ENCODE measurements at regions of chr3 and their contacts with region 1.

Region 1: DNA sequence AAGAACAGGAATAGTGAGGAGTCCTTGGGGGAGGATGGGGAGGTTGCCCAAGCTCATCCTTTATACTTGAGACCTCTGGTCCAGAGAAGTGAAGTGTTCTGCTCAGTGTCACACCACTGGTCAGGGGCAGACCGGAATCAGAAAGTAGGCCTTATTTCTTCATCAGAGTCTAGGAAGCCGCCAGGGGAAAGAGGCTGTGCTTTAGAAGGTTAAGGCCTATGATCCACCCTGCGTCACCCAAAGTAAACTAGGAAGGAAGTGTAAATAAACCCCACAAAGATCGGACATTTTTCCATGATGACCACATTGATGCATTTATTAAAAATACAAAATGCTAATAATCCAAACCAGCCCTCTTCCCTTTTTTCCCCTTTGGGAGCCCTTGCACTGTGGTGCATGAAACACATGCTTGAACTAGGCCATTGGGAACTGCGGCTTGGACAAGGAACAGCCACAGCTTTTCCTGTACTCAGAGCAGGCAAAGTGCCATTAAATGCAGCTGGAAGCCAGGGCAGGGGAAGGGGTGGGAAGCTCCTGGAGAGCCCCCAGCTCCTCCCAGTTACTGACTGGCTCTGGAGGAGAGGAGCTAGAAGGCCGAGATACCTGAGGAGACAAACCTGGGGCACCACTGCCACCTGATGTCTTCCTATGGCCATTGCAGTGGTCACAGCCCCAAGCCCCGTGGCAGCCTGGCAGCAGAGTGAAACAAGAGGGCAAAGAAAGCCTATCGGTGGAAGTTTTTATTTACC is 37.0 kb downstream of the CDC25A start:
- DNase-seq: peak; percentile 88
- H3K4me3 ChIP-seq: no peak overlapping the region
- H3K27ac ChIP-seq: peak overlapping the region; percentile 18
- H3K4me1 ChIP-seq: peaks cover 10% of the 10 kb centered on the region
- H3K27me3 ChIP-seq: no peaks in the 10 kb centered on the region
- CTCF ChIP-seq: peak; percentile 83 to 87
- POLR2A ChIP-seq: no peak

Region 2: DNA sequence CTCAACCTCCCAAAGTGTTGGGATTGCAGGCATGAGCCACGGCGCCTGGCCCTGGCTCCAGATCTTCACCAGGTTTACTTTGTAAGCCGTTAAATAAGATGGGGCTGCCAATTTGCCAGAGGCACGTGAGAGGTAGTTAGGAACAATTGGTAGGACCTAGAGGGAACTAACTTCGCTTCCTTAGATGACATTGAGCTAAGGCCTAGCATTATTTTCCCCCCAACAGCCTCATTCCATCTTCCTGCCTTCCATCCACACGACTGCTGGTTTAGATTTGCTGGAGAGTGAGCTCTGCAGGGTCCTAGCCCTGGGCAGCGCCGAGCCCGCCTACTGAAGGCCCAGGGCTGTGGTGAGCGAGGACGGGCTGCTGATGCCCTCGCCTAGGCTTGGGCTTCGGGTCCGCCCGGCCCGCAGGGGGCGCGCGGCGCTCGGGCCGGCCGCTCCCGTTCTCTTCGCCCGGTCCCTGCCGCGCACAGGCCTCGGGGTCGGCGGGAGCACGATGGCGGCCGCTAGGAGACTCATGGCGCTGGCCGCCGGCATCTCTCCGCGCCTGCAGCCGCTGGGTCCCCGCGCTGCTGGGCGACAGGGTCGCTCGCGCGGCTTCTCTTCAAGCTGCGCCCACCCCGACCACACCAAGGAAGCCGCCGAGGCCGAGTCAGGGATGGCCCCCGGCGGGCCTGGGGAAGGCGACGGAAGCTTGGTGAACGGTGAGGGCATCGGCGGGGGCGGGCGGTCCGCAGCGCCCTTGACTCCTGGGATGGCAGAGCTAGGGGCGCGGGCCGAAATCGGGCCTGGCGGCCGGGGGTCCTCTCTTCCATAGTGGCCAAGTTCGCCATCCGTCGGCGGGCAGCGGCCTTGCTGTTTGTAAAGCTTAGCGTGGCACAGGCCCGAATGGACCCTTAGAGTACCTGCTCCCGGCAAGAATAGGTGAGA is 326.4 kb before region 1 on chr3:
- CTCF ChIA-PET with region 1: interaction called, 28 read pairs
- POLR2A ChIA-PET with region 1: no interaction called
- dilution Hi-C with region 1: no loop called
- intact Hi-C with region 1: loop called (anchors 1 kb)
- DNase-seq: peak; percentile 85
- H3K4me3 ChIP-seq: peak overlapping the region; percentile 78 to 97 (median 82)
- H3K27ac ChIP-seq: peak overlapping the region; percentile 68
- H3K4me1 ChIP-seq: peaks cover 19% of the 10 kb centered on the region
- H3K27me3 ChIP-seq: no peaks in the 10 kb centered on the region
- CTCF ChIP-seq: peak; percentile 82 to 96
- POLR2A ChIP-seq: peak; percentile 83

Region 3: DNA sequence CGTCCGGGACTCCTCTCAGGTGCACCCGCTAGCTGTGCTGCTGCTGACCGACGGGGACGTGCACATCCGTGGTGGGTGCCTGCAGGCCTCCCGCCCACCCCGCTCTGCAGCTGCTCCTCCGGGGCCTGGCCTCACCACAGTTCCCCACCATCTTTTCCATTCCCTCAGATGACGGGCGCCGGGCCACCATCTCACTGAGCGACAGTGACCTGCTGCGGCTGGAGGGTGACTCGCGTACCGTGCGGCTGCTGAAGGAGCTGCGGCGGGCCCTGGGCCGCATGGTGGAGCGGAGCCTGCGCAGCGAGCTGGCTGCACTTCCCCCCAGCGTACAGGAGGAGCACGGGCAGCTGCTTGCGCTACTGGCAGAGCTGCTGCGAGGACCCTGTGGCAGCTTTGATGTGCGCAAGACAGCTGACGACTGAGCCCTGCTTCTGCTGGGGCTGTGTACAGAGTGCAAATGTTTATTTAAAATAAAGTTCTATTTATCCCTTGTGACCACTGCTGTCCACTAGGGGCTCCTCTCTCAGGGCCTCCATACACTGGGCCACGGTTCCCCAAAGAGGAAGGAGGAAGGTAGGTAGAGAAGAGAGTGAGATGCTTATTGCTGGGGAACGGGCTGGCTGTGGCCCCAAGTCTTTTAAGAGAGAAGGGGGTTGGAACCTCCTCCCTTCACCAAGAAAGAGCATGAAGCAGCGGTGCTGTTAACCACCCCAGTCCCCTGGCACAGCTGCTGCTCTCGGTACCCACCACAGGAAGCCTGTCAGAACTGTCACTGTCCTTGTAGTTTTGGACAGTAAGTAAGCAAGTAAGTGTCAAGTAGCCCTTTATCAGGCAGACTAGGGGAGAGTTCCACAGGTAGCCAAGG is 301.3 kb before region 1 on chr3:
- CTCF ChIA-PET with region 1: interaction called, 15 read pairs
- POLR2A ChIA-PET with region 1: no interaction called
- dilution Hi-C with region 1: no loop called
- intact Hi-C with region 1: loop called (anchors 1 kb)
- DNase-seq: peak; percentile 31
- H3K4me3 ChIP-seq: no peak overlapping the region
- H3K27ac ChIP-seq: no peak overlapping the region
- H3K4me1 ChIP-seq: no peaks in the 10 kb centered on the region
- H3K27me3 ChIP-seq: no peaks in the 10 kb centered on the region
- CTCF ChIP-seq: peak; percentile 40 to 48
- POLR2A ChIP-seq: no peak

Region 4: DNA sequence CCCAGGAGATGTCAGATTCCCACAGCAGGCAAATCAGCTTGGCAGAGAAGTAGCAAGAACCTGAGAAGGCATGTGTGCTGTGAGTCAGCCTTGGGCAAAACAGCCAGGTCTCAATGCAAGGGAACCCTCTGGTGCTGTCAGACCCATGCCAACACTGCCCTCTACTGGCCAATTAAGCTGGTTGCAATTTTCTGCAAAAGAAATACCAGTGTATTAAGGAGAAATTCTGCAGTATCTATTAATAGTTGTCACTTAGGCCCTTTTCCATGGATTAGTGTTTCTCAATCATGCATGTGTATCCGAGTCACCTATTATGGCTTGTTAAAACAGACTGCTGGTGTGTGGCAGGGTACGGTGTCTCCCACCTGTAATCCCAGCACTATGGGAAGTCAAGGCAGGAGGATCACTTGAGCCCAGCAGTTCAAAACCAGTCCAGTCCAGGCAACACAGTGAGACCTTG is 161.2 kb before region 1 on chr3:
- CTCF ChIA-PET with region 1: interaction called, 44 read pairs
- POLR2A ChIA-PET with region 1: no interaction called
- dilution Hi-C with region 1: no loop called
- intact Hi-C with region 1: loop called (anchors 1 kb)
- DNase-seq: peak; percentile 85
- H3K4me3 ChIP-seq: no peak overlapping the region
- H3K27ac ChIP-seq: no peak overlapping the region
- H3K4me1 ChIP-seq: peaks cover 13% of the 10 kb centered on the region
- H3K27me3 ChIP-seq: no peaks in the 10 kb centered on the region
- CTCF ChIP-seq: peak; percentile 73 to 87
- POLR2A ChIP-seq: no peak

Region 5: DNA sequence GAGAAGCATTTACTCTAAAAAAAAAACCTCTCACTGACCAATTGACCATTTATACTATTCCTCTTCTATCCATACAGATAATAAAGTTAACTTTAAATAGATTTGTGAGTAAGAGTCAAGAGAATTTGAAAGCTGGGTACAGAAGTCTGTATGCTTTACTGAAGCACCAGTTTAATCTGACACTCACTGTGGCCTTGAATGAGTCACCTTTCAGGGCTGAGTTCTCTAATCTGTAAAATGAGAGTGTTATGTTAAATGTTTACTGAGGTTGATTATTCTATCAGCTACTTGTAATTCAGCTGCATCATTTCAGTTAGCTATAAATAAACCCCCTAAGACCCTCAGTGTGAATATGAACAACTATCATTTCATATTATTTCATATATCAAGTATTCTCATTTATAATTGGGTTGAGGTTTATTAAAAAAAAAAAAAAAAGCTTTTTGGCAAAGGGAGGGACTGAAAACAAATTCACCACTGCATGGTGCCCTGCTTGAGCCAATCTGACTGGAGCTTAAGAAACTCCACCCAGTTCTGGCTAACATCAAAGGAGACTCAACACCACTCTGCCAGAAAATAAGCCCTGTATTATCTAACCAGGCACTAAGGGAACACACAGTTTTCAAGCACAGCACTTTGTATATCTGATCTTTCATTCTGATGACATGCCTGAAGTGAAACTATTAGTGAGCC is 137.8 kb before region 1 on chr3:
- CTCF ChIA-PET with region 1: interaction called, 10 read pairs
- POLR2A ChIA-PET with region 1: no interaction called
- dilution Hi-C with region 1: no loop called
- intact Hi-C with region 1: loop called (anchors 5 kb)
- DNase-seq: peak; percentile 60
- H3K4me3 ChIP-seq: no peak overlapping the region
- H3K27ac ChIP-seq: peak overlapping the region; percentile 16
- H3K4me1 ChIP-seq: peaks cover 39% of the 10 kb centered on the region
- H3K27me3 ChIP-seq: no peaks in the 10 kb centered on the region
- CTCF ChIP-seq: no peak
- POLR2A ChIP-seq: no peak

Region 6: DNA sequence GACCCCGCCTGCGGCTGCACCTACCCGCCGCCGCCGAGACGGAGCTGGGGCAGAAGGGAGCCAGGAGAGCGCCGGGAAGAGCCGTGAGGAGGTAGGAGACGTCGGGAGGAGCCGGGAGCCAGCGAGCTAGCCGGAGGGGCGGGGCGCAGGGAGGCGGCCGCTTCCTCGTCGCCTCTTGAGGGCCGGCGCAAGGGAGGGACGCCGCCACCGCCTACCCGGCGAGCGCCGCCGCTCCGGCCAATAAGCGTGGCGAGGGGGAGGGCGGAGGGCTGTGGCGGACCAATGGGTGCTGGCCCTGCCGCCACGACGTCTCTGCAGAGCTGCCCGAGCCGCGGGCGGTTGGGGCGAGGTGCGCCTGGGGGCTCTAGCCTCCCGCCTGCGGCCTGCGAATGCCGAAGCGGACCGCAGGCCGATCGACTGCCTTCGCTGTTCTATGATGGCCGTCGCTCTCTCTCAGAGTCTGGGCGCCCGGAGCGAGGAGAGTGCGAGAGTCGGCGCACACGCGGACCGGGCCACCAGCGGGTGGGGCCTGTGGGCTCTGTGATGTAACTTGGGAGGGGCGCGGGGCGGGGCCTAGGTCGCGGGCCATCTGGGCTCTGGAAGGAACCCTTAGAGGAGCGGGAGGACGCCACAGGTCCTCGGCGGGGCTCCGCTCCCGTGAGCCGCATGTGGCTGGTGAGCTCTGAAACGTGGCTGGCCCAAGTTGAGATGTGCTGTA is 62.3 kb before region 1 on chr3:
- CTCF ChIA-PET with region 1: interaction called, 46 read pairs
- POLR2A ChIA-PET with region 1: no interaction called
- dilution Hi-C with region 1: no loop called
- intact Hi-C with region 1: loop called (anchors 1 kb)
- DNase-seq: peak; percentile 99
- H3K4me3 ChIP-seq: peak overlapping the region; percentile 83 to 94 (median 94)
- H3K27ac ChIP-seq: peak overlapping the region; percentile 70
- H3K4me1 ChIP-seq: peaks cover 18% of the 10 kb centered on the region
- H3K27me3 ChIP-seq: no peaks in the 10 kb centered on the region
- CTCF ChIP-seq: no peak
- POLR2A ChIP-seq: peak; percentile 80

Region 7: DNA sequence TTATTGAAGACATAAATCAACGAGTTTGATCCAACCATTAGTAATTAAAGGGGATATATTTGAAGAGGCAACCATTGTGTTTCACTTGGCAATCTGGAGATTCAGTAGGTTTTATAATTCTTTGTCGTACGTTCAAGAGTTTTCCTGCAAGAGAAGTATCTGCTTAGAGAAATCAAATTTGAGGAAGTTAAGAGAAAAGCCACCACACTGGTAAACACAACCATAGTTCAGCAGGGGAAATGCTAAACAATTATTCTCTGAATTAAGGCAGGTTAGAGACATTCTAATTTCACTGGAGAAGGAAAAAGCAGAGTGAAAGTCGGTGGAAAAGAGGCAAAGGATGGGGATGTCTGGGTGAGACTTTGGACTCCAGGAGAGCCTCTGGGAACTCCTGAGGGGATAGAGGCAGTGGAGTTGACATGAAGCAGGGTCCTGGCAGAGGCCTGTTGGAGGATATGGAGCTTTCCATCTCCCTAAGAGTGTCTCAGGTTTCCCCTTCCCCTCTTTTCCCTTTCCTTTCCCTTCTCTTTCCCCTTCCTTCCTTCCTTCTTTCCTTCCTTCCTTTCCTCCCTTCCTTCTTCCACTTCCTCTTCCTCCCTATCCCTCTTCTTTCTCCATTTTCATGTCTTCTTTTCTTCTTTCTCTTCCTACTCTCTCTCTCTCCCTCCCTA is 155.8 kb after region 1 on chr3:
- CTCF ChIA-PET with region 1: no interaction called
- POLR2A ChIA-PET with region 1: no interaction called
- dilution Hi-C with region 1: no loop called
- intact Hi-C with region 1: no loop called
- DNase-seq: no peak
- H3K4me3 ChIP-seq: no peak overlapping the region
- H3K27ac ChIP-seq: no peak overlapping the region
- H3K4me1 ChIP-seq: no peaks in the 10 kb centered on the region
- H3K27me3 ChIP-seq: peaks cover 12 to 31% of the 10 kb centered on the region in 2 experiments
- CTCF ChIP-seq: no peak
- POLR2A ChIP-seq: no peak

Measured in endothelial cell of umbilical vein (primary cell).